Mammary epithelial cell (primary cell): ENCODE measurements at regions of chr19 and their contacts with region 1.

Region 1: DNA sequence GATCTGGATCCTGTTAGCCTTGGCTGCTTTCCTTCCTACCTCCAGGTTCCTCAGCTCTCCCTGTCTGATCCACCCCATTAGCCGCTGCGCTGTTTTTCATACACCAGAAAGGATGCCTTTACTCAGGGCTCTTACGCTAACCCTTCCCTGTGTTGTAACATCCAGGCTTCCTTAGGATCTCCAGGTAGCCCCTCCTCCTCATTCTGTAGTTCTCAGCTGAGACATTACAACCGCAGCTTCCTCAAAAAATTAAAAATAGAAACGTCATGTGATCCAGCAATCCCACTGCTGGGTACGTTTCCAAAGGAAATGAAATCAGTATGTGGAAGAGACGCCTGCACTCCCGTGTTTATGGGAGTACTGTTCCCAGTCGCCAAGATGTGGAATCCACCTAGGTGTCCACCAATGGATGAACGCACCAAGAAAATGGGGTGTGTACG is 18.4 kb upstream of the MYADM start:
- DNase-seq: no peak
- H3K4me3 ChIP-seq: no peak overlapping the region
- H3K27ac ChIP-seq: no peak overlapping the region
- H3K4me1 ChIP-seq: no peaks in the 10 kb centered on the region
- H3K27me3 ChIP-seq: no peaks in the 10 kb centered on the region
- CTCF ChIP-seq: no peak

Region 2: DNA sequence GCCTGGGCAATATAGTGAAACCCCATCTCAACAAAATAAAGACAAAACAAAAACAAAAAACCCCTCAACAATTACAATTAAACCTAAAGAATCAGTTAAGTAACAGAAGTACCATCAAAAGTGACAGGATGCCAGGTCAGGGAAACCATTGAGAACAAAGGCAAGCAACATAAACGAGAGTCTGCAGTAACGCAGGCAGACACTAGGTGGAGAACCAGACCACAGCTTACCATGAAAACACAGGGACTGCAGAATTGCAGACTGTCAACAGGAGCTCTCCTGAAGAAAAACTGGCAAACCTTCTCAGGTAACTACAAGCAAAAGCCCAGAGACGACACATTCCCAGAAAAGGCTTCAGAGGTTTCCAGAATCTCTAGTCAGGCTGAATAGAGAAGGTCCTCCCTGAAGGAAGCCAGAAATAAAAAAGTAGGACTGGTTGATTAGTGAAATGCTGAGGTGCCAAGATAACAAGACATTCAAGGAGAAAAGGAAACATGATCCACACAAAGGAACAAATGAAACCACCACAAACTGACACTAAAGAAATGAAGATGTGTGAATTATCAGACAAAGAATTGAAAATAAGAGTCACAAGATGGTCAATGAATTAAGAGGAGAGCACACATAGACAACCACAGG is 653.9 kb before region 1 on chr19:
- CTCF ChIA-PET with region 1: no interaction called
- dilution Hi-C with region 1: no loop called
- in situ Hi-C with region 1: no loop called
- intact Hi-C with region 1: loop called (anchors 5 kb)
- DNase-seq: peak; percentile 74
- H3K4me3 ChIP-seq: no peak overlapping the region
- H3K27ac ChIP-seq: no peak overlapping the region
- H3K4me1 ChIP-seq: no peaks in the 10 kb centered on the region
- H3K27me3 ChIP-seq: no peaks in the 10 kb centered on the region
- CTCF ChIP-seq: peak; percentile 87 to 94

Region 3: GRCh38 chr19:53906211-53907192 is 57.2 kb after region 1 on chr19:
- CTCF ChIA-PET with region 1: no interaction called
- dilution Hi-C with region 1: no loop called
- in situ Hi-C with region 1: no loop called
- intact Hi-C with region 1: loop called (anchors 10 kb)
- DNase-seq: no peak
- H3K4me3 ChIP-seq: no peak overlapping the region
- H3K27ac ChIP-seq: no peak overlapping the region
- H3K4me1 ChIP-seq: no peaks in the 10 kb centered on the region
- H3K27me3 ChIP-seq: peaks cover 23% of the 10 kb centered on the region
- CTCF ChIP-seq: peak; percentile 50 to 71

Region 4: DNA sequence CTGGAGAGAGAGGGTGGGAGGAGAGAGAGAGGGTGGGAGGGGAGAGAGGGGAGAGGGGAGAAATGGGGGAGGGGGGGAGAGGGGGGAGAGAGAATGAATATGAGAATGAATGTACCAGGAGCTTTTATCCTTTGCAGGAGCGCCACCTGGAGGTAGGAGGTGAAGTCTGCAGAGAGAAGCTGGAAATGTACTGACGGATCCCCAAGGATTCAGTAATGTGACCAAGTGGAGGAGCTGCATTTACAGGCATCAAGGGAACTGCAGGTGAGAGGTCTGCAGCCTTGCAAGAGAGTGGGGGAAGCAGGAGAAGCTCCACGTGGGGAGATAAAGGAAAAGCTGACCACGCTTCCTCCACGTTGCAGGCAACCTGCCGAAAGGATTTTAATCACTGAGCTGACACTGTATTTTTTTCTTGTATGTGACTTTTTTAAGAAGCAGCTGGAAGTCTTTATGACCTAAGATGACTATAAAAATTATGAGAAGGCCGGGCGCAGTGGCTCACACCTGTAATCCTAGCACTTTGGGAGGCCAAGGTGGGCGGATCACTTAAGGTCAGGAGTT is 180.8 kb after region 1 on chr19:
- CTCF ChIA-PET with region 1: interaction called, 14 read pairs
- dilution Hi-C with region 1: no loop called
- in situ Hi-C with region 1: loop called in 1 of 2 experiments (anchors 10 kb)
- intact Hi-C with region 1: no loop called
- DNase-seq: peak; percentile 28
- H3K4me3 ChIP-seq: no peak overlapping the region
- H3K27ac ChIP-seq: no peak overlapping the region
- H3K4me1 ChIP-seq: no peaks in the 10 kb centered on the region
- H3K27me3 ChIP-seq: no peaks in the 10 kb centered on the region
- CTCF ChIP-seq: peak; percentile 30 to 59

Region 5: GRCh38 chr19:54041969-54042606 is 192.8 kb after region 1 on chr19:
- CTCF ChIA-PET with region 1: no interaction called
- dilution Hi-C with region 1: loop called (anchors 10 kb)
- in situ Hi-C with region 1: no loop called
- intact Hi-C with region 1: no loop called
- DNase-seq: no peak
- H3K4me3 ChIP-seq: no peak overlapping the region
- H3K27ac ChIP-seq: no peak overlapping the region
- H3K4me1 ChIP-seq: no peaks in the 10 kb centered on the region
- H3K27me3 ChIP-seq: no peaks in the 10 kb centered on the region
- CTCF ChIP-seq: no peak

Region 6: GRCh38 chr19:54102421-54103169 is 253.3 kb after region 1 on chr19 and contains the start of gene NDUFA3:
- CTCF ChIA-PET with region 1: no interaction called
- dilution Hi-C with region 1: no loop called
- in situ Hi-C with region 1: no loop called
- intact Hi-C with region 1: loop called (anchors 5 kb)
- DNase-seq: peak; percentile 97
- H3K4me3 ChIP-seq: peak within 1 kb of the TSS; percentile 95 to 99 (median 98)
- H3K27ac ChIP-seq: peak within 1 kb of the TSS; percentile 0
- H3K4me1 ChIP-seq: peaks cover 3% of the 10 kb centered on the region
- H3K27me3 ChIP-seq: no peaks in the 10 kb centered on the region
- CTCF ChIP-seq: no peak
- total RNA-seq, gene NDUFA3: 12.8 to 86.7 TPM

Region 7: DNA sequence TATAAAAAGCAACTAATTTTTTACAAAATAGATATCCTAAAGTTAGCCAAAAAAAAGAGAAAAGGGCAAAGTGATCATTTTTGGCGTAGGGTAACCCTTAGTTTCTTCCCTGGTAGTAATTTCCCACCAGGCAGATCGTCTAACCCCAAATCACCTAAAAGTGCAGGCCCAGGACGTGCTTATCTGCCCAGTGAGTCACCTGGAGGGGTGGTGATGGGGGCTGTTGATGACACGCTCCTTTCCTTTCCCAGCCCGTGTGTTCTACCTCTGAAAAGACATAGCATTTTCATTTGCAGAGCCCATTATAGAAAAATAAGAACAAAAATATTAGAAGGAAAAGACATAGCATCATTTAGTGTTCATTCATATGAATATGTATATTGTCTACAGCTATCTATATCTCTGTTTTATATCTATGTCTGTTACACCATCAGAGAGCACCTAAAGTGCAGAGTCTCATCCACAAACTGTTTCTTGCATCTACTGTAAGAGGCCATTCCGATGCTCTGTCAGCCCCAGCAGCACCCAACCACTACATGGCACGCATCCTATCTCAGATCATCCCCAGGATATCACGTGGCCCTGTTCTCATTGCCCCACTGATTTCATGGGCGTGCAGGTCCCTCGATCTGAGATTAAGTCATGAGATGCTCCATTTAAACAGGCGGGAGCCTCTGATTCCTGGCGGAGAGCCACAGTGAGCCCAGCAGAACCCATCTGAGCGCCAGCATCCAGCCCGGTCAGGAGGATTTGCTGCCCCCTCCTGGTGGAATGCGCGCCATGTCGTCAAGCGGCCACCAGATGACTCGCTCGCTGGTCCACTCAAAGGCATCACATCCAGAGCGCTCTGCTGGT is 382.0 kb after region 1 on chr19:
- CTCF ChIA-PET with region 1: no interaction called
- dilution Hi-C with region 1: no loop called
- in situ Hi-C with region 1: no loop called
- intact Hi-C with region 1: loop called (anchors 10 kb)
- DNase-seq: peak; percentile 62
- H3K4me3 ChIP-seq: no peak overlapping the region
- H3K27ac ChIP-seq: no peak overlapping the region
- H3K4me1 ChIP-seq: no peaks in the 10 kb centered on the region
- H3K27me3 ChIP-seq: no peaks in the 10 kb centered on the region
- CTCF ChIP-seq: peak; percentile 85 to 94